ENCODE measurements at regions of chr1 and their contacts with region 1.

Region 1: DNA sequence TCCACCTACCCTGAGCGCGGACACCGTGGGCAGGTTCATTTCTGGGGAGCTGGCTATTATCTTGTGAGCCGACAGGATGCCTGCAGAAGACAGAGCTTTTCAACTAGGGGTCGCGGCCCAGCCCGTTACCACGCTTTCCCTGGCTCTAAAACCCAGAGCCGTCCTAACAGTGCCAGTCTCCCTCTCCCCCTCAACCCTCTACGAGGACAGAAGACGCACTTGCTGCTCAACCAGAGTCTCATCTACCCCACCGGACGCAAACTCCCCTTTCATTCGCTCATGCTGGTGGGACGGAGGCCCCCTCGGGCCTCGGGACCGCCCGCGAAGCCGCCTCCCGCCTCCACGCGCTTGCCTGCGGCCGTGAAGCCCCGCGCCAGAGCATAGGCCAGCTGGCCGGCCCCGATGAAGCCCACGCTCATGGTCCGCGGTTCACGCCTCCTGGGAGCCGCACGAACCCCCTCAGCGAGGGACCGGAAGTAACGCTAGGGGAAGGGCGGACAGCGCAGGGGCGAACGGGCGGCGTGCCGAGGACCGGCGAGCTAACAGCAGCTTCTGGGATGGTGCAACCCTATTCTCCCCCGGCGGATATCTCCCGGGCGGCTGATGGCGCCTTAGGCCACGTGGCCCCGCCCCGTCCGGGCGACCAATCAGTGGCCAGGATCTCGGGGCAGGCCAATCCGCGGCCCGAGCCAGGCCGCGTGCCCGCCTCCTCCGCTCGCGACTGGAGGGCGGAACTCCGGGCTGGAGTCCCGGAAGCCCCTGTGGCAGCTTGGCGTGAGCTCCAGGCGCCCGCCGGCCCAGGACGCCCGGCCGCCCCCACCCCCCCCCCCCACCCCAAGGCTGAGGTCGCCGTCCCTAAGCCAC is at the start of gene PYCR2:
- DNase-seq: peak; percentile 97
- H3K4me3 Mint-ChIP-seq: peak within 1 kb of the TSS; percentile 96
- H3K27ac Mint-ChIP-seq: peak within 1 kb of the TSS; percentile 89
- H3K4me1 Mint-ChIP-seq: peaks cover 54% of the 10 kb centered on the region
- H3K27me3 Mint-ChIP-seq: no peaks in the 10 kb centered on the region
- total RNA-seq, gene PYCR2: 101 to 105 TPM

Region 2: DNA sequence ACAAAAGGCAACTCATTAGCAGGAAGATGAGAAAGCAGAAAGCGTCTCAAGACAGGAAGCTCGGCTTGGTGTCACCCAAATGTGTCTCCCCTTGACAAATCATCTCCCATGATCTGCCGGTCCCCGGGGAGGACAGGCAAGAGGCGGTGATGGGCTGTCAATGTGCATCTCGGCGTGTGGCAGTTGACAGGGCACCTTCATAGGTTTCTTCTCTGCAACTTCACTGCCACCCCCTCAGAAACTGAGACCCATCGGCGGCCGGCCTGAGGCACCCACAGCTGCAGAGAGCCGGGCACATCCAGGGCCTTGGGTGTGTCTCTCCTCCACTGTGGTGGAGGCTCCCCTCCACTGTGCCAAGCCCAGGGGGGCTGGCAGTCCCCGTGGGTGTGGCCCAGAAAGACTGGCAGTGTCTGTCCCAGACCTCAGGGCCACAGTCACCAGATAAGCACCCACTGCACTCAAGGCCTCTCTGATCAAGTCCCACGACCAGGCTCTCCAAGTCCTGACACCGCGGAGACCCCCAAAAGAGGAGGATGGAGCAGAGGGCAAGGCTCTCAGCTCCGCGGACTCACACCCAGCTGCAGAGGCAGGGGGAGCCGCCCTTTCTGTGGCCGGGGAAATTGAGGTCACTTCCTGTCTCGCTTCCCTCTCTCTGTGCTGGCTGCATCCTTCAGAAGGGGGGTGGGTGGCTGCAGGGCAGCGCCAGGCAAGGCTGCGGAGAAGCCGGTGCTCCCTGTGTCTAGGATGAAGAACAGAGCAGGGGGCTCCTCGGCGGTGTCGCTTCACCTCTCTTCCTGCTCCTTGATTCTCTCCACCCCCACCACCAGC is 456.5 kb before region 1 on chr1:
- CTCF ChIA-PET with region 1: no interaction called
- POLR2A ChIA-PET with region 1: interaction called, 29 read pairs
- DNase-seq: peak; percentile 91
- H3K4me3 Mint-ChIP-seq: peak overlapping the region; percentile 91
- H3K27ac Mint-ChIP-seq: peak overlapping the region; percentile 99
- H3K4me1 Mint-ChIP-seq: peaks cover 64% of the 10 kb centered on the region
- H3K27me3 Mint-ChIP-seq: no peaks in the 10 kb centered on the region

Region 3: DNA sequence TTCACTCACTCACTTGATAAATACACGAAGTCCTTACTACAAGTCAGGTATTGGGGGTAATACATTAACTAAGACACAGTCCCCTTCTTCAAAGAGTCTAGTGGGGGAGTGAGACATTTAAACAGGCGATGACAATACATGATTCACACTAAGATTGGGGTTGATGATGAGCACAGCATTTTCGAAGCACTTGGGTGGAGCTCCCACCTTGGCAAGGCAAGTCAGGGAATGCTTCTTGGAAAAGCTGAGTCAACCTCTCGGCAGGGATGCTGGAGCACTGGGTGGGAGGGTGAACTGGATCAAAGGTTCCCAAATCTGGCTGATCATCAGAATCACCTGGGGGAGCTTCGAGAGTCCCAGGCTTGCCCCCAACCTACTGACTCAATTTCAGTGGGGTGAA is 213.1 kb before region 1 on chr1:
- CTCF ChIA-PET with region 1: no interaction called
- POLR2A ChIA-PET with region 1: no interaction called
- DNase-seq: no peak
- H3K4me3 Mint-ChIP-seq: no peak overlapping the region
- H3K27ac Mint-ChIP-seq: no peak overlapping the region
- H3K4me1 Mint-ChIP-seq: no peaks in the 10 kb centered on the region
- H3K27me3 Mint-ChIP-seq: no peaks in the 10 kb centered on the region

Region 4: GRCh38 chr1:225835856-225836255 is 88.1 kb before region 1 on chr1:
- CTCF ChIA-PET with region 1: no interaction called
- POLR2A ChIA-PET with region 1: no interaction called
- DNase-seq: no peak
- H3K4me3 Mint-ChIP-seq: no peak overlapping the region
- H3K27ac Mint-ChIP-seq: no peak overlapping the region
- H3K4me1 Mint-ChIP-seq: peaks cover 1% of the 10 kb centered on the region
- H3K27me3 Mint-ChIP-seq: no peaks in the 10 kb centered on the region

Region 5: DNA sequence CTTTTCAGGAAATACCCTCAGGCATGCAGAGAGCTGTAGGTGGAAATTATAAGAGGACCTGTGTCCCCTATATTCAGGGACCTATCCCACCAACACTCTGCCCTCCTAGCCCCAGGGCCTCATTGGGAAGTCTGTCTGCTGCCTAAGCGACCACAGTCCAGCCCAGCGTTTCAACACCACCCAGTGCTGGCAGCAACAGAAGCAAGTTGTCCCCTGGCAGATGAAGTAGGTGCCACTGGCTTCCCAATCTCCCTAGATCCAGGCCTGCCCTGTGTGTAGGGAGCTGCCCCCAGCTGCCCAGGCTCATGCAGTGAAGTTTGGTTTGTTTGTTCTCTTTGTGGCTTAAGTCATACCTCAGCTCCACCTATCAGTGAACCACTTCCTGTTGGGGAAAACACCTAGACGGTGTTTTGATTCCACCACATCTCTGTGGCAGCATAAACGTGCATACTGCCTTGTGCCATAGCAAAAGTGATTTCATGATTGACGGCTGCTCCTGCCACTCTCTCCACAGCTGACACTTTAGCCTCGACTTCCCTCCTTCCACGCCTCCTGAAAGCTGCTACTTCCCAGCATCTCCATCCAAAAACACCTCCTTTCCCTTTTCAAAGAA is 26.9 kb before region 1 on chr1:
- CTCF ChIA-PET with region 1: interaction called, 3 read pairs
- POLR2A ChIA-PET with region 1: interaction called, 29 read pairs
- DNase-seq: peak; percentile 83
- H3K4me3 Mint-ChIP-seq: peak overlapping the region; percentile 12
- H3K27ac Mint-ChIP-seq: peak overlapping the region; percentile 64
- H3K4me1 Mint-ChIP-seq: peaks cover 36% of the 10 kb centered on the region
- H3K27me3 Mint-ChIP-seq: peaks cover 21% of the 10 kb centered on the region

Region 6: GRCh38 chr1:225911191-225912130 is 12.5 kb before region 1 on chr1:
- CTCF ChIA-PET with region 1: interaction called, 6 read pairs
- POLR2A ChIA-PET with region 1: interaction called, 10 read pairs
- DNase-seq: peak; percentile 74
- H3K4me3 Mint-ChIP-seq: no peak overlapping the region
- H3K27ac Mint-ChIP-seq: no peak overlapping the region
- H3K4me1 Mint-ChIP-seq: peaks cover 4% of the 10 kb centered on the region
- H3K27me3 Mint-ChIP-seq: peaks cover 6% of the 10 kb centered on the region